ENCODE measurements at regions of chr12 and their contacts with region 1.

Region 1: GRCh38 chr12:124940549-124941527 is 26.4 kb upstream of the UBC start:
- DNase-seq: peak; percentile 89 to 92
- ATAC-seq: peak; percentile 75 to 90 (median 82)
- H3K4me3 ChIP-seq: peak overlapping the region in 9 of 10 donors; percentile 35 to 66 (median 54)
- H3K27ac ChIP-seq: peak overlapping the region; percentile 66 to 95 (median 87)
- H3K4me1 ChIP-seq: peaks cover 5 to 47% (median 30%) of the 10 kb centered on the region in 9 donors
- H3K27me3 ChIP-seq: no peaks in the 10 kb centered on the region
- CTCF ChIP-seq: peak; percentile 87 to 96 (median 93)

Region 2: GRCh38 chr12:124927201-124928094 is 13.4 kb before region 1 on chr12:
- intact Hi-C with region 1: loop called in 3 of 10 experiments (anchors 1 kb)
- DNase-seq: peak; percentile 87 to 93
- ATAC-seq: peak; percentile 88 to 97 (median 93)
- H3K4me3 ChIP-seq: peak overlapping the region; percentile 49 to 84 (median 70)
- H3K27ac ChIP-seq: peak overlapping the region; percentile 86 to 97 (median 92)
- H3K4me1 ChIP-seq: peaks cover 0 to 27% (median 8%) of the 10 kb centered on the region in 9 donors
- H3K27me3 ChIP-seq: no peaks in the 10 kb centered on the region
- CTCF ChIP-seq: no peak